Ascending aorta (tissue), 2 donors: ENCODE measurements at regions of chr11 and their contacts with region 1.

Region 1: GRCh38 chr11:57644748-57645688 is 4.7 kb downstream of the YPEL4 start:
- DNase-seq: peak; percentile 46 to 92
- H3K4me3 ChIP-seq: peak overlapping the region in 1 of 2 donors; percentile 33
- H3K27ac ChIP-seq: peak overlapping the region; percentile 43 to 72
- H3K4me1 ChIP-seq: peaks cover 3 to 55% of the 10 kb centered on the region in 2 donors
- H3K27me3 ChIP-seq: peaks cover 6% of the 10 kb centered on the region
- CTCF ChIP-seq: peak; percentile 77 to 93 (median 87)

Region 2: GRCh38 chr11:57335343-57336110 is 309.5 kb before region 1 on chr11 and contains the start of gene SSRP1:
- intact Hi-C with region 1: loop called (anchors 5 kb)
- DNase-seq: peak in 1 of 2 donors; percentile 93
- H3K4me3 ChIP-seq: peak within 1 kb of the TSS; percentile 88 to 94
- H3K27ac ChIP-seq: peak within 1 kb of the TSS; percentile 95 to 97
- H3K4me1 ChIP-seq: peaks cover 5 to 12% of the 10 kb centered on the region in 2 donors
- H3K27me3 ChIP-seq: no peaks in the 10 kb centered on the region
- CTCF ChIP-seq: no peak
- total RNA-seq, gene SSRP1: 110 TPM

Region 3: GRCh38 chr11:57585301-57585700 is 59.7 kb before region 1 on chr11:
- intact Hi-C with region 1: no loop called
- DNase-seq: no peak
- H3K4me3 ChIP-seq: no peak overlapping the region
- H3K27ac ChIP-seq: no peak overlapping the region
- H3K4me1 ChIP-seq: no peaks in the 10 kb centered on the region
- H3K27me3 ChIP-seq: no peaks in the 10 kb centered on the region
- CTCF ChIP-seq: no peak